ENCODE measurements at regions of chr4 and their contacts with region 1.

Region 1: GRCh38 chr4:95516528-95517017 is 32.2 kb downstream of the UNC5C start:
- DNase-seq: no peak
- ATAC-seq: no peak
- H3K4me3 ChIP-seq: no peak overlapping the region
- H3K27ac ChIP-seq: no peak overlapping the region
- H3K4me1 ChIP-seq: no peaks in the 10 kb centered on the region
- H3K27me3 ChIP-seq: no peaks in the 10 kb centered on the region
- CTCF ChIP-seq: no peak
- EP300 ChIP-seq: no peak
- POLR2A ChIP-seq: no peak
- RAD21 ChIP-seq: no peak

Region 2: GRCh38 chr4:95295157-95295556 is 221.4 kb before region 1 on chr4:
- CTCF ChIA-PET with region 1: no interaction called
- POLR2A ChIA-PET with region 1: no interaction called
- in situ Hi-C with region 1: no loop called
- intact Hi-C with region 1: loop called (anchors 5 kb)
- DNase-seq: no peak
- ATAC-seq: no peak
- H3K4me3 ChIP-seq: no peak overlapping the region
- H3K27ac ChIP-seq: no peak overlapping the region
- H3K4me1 ChIP-seq: no peaks in the 10 kb centered on the region
- H3K27me3 ChIP-seq: no peaks in the 10 kb centered on the region
- CTCF ChIP-seq: no peak
- EP300 ChIP-seq: no peak
- POLR2A ChIP-seq: no peak
- RAD21 ChIP-seq: no peak

Region 3: DNA sequence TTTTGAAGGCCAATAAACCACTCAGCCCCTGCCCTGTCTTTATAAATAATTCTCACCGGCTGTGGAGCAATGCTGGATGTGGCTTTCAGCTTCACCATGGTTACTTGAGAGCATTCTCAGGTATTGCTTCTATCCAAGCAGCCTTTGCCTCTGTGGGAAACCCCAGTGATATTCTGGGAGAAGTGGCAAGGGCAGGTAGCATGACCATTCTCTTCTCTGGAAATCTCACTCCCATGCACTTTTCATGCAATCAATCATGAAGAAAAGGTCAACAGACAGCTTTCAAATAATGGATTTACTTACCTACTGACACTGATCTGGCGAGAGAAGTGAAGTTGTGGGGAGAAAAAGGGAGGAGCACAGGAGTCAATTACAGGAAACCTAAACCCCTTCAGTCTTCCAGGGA is 17.3 kb before region 1 on chr4:
- CTCF ChIA-PET with region 1: no interaction called
- POLR2A ChIA-PET with region 1: no interaction called
- in situ Hi-C with region 1: no loop called
- intact Hi-C with region 1: no loop called
- DNase-seq: no peak
- ATAC-seq: no peak
- H3K4me3 ChIP-seq: no peak overlapping the region
- H3K27ac ChIP-seq: no peak overlapping the region
- H3K4me1 ChIP-seq: no peaks in the 10 kb centered on the region
- H3K27me3 ChIP-seq: no peaks in the 10 kb centered on the region
- CTCF ChIP-seq: no peak
- EP300 ChIP-seq: no peak
- POLR2A ChIP-seq: no peak
- RAD21 ChIP-seq: no peak

Region 4: DNA sequence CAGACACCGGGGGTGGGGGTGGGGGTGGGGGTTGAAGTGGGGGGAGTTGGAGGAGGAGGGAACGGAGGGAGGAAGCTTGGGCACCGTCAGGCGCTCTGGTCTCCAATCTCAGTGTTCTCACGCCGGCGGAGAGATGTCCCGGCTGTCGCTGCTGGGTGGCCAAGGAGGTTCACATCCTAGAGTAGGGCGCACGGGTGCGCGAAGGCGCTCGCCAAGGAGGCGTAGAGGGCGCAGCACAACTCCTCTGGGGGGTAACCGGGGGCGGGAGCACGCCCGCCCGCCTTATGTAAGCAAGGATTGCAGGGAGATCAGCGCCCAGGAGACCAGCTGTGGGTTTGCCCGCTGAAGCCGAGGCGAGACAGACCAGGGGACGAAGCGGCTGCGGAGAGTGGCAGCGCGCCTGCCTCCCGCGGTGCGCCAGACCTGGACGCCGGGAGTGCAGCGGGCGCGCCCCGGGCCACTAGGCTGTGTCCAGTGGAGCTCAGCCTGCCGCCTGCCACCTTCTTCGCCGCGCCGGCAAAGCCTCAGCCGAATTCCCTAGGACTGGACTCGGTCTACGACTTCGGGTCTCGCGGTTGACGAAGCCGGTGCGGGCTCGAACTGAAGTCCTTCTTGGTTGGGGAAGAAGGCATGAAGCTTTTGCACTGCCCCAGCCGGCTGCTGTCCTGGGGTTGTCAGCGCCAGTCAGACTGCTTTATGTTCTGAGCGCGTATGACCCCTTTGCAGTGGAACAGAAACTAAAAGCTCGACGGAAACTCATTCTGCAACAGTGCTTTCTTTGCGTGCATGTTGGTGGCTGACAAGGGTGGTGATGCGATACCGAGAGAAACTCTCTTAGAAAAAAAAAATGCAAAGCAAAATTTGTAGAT is 32.9 kb after region 1 on chr4:
- CTCF ChIA-PET with region 1: no interaction called
- POLR2A ChIA-PET with region 1: no interaction called
- in situ Hi-C with region 1: no loop called
- intact Hi-C with region 1: no loop called
- DNase-seq: no peak
- ATAC-seq: peak; percentile 86
- H3K4me3 ChIP-seq: no peak overlapping the region
- H3K27ac ChIP-seq: no peak overlapping the region
- H3K4me1 ChIP-seq: no peaks in the 10 kb centered on the region
- H3K27me3 ChIP-seq: peaks cover 0 to 16% of the 10 kb centered on the region in 2 experiments; a peak in 2 of 5 replicates
- CTCF ChIP-seq: no peak
- EP300 ChIP-seq: no peak
- POLR2A ChIP-seq: no peak
- RAD21 ChIP-seq: no peak